ENCODE measurements at regions of chr2 and their contacts with region 1.

Region 1: DNA sequence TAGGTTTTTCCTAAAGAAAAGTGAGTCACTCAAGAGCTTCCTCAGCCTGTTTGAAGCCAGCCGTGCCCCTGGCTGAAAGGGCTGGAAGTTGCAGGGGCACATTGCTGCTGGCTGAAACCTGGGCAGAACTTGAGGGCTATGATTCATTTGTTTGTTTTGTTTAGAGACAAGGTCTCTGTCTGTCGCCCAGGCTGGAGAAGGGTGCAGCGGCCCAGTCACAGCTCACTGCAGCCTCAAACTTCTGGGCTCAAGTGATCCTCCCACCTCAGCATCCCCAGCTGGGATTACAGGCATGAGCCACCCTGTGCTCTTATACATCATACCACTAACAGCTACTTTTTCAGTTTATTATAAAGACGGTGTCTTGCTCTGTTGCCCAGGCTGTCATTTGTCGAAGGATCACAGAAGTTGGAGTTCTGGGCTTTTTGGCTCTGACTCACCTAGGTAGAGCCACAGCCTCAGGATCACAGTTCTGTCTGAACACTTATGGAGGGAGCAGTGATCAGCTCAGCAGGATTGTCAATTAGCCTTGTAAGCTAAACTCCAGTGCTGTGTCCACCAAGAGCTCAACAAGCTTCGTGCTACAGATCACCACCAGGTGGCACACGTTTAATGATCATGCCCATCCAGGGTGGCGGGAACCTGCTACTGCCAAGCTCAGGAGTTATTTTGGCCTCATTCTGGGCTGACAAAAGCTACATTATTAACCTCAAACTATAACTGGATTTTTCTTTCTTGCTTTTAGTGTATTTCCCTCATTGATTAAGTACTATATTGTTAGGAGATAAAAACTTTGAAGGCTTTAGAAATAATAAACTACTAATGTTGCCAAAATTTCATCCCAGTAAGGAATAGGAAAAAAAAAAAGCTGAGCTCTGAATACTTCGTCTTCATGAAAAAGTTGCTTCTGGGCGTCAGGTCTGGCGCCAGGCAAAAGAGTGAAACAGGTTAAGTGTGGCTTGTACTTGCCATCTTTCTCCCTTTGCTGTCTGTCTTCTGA is 57.9 kb downstream of the ARHGEF33 start:
- DNase-seq: peak; percentile 14 to 81
- H3K4me3 ChIP-seq: no peak overlapping the region
- H3K27ac ChIP-seq: no peak overlapping the region
- H3K4me1 ChIP-seq: no peaks in the 10 kb centered on the region
- H3K27me3 ChIP-seq: no peaks in the 10 kb centered on the region
- CTCF ChIP-seq: peak; percentile 42 to 76 (median 62)

Region 2: GRCh38 chr2:38850045-38850444 is 97.5 kb before region 1 on chr2:
- intact Hi-C with region 1: no loop called
- DNase-seq: no peak
- H3K4me3 ChIP-seq: no peak overlapping the region
- H3K27ac ChIP-seq: no peak overlapping the region
- H3K4me1 ChIP-seq: no peaks in the 10 kb centered on the region
- H3K27me3 ChIP-seq: no peaks in the 10 kb centered on the region
- CTCF ChIP-seq: no peak

Region 3: DNA sequence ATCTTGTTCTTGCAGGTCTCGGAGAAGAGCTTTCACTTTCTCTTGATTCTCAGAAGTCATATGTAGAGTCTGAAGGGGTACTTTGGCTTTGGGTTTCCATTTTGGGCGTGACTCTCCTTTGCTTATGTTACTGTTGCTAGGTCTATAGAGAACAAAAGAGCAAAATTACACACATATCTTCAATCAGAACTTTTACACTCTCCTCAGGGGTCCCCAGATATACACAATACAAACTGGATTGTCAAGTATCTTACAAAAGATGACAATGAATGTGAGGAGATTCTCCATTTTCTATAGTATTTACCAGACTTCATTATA is 84.2 kb before region 1 on chr2:
- intact Hi-C with region 1: no loop called
- DNase-seq: no peak
- H3K4me3 ChIP-seq: no peak overlapping the region
- H3K27ac ChIP-seq: no peak overlapping the region
- H3K4me1 ChIP-seq: no peaks in the 10 kb centered on the region
- H3K27me3 ChIP-seq: no peaks in the 10 kb centered on the region
- CTCF ChIP-seq: no peak

Region 4: DNA sequence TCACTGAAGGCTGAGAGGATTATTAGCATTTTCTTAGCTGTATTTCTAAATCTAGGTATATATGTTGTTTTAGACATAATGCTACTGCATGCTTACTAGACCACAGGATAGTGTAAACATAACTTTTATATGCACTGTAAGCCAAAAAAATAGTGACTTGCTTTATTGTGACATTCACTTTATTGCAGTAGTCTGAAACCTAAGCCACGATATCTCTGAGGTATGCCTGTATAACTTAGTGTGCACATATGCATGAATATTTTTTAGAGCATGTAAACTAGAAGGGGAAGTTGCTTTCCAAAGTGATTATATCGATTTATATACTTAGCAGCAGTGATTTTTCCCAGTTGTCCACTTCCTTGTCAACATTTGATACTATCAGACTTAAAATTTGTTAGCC is 91.5 kb after region 1 on chr2:
- intact Hi-C with region 1: loop called (anchors 5 kb)
- DNase-seq: no peak
- H3K4me3 ChIP-seq: no peak overlapping the region
- H3K27ac ChIP-seq: no peak overlapping the region
- H3K4me1 ChIP-seq: no peaks in the 10 kb centered on the region
- H3K27me3 ChIP-seq: no peaks in the 10 kb centered on the region
- CTCF ChIP-seq: no peak

Measured in ascending aorta (tissue), 2 donors.